ENCODE measurements at regions of chr16 and their contacts with region 1.

Region 1: GRCh38 chr16:81493755-81494433 is 49.3 kb downstream of the CMIP start:
- DNase-seq: no peak

Region 2: DNA sequence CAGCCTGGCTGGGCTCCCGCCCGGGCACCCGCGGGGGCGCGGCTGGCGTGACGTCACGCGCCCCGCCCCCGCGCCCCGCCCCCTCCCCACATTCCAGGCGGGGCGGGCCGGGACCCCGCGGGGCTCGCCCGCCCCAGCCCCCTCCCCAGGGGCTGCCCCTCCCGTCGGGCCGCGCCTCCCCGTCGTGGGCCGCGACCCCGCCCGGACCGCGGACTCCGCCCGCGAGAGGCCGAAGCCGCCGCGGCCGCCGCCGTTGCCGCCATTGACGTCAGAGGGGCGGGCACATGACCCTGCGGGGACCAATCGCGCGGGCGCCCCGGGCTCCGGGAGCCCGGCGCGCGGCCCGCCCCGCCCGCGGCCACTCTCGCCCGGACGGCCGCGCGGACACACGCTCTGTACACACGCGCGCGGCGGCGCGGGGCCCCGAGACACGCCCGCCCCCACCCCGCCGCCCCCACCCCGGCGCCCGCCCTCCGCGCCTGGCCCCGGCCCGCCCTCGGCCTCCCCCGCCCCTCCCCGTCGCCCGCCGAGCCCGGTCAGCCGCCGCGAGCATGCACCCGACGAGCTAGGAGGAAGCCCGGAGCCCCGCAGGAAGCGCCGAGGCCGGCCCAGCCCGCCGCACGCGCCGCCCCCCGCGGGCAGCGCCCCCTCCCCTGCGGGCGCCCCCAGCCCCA is 49.3 kb before region 1 on chr16 and contains the start of gene CMIP:
- intact Hi-C with region 1: loop called (anchors 5 kb)
- DNase-seq: peak; percentile 91
- total RNA-seq, gene CMIP: 19.8 TPM

Region 3: GRCh38 chr16:81610144-81610842 is 116.4 kb after region 1 on chr16:
- intact Hi-C with region 1: loop called (anchors 1 kb)
- DNase-seq: peak; percentile 85